Esophagus muscularis mucosa (tissue), 4 donors: ENCODE measurements at regions of chr13 and their contacts with region 1.

Region 1: GRCh38 chr13:36875431-36875830 is 44.6 kb downstream of the SMAD9 start:
- DNase-seq: no peak
- H3K4me3 ChIP-seq: no peak overlapping the region
- H3K27ac ChIP-seq: no peak overlapping the region
- H3K4me1 ChIP-seq: peaks cover 0 to 22% (median 5%) of the 10 kb centered on the region in 4 donors
- H3K27me3 ChIP-seq: no peaks in the 10 kb centered on the region
- CTCF ChIP-seq: no peak
- EP300 ChIP-seq: no peak
- POLR2A ChIP-seq: no peak

Region 2: DNA sequence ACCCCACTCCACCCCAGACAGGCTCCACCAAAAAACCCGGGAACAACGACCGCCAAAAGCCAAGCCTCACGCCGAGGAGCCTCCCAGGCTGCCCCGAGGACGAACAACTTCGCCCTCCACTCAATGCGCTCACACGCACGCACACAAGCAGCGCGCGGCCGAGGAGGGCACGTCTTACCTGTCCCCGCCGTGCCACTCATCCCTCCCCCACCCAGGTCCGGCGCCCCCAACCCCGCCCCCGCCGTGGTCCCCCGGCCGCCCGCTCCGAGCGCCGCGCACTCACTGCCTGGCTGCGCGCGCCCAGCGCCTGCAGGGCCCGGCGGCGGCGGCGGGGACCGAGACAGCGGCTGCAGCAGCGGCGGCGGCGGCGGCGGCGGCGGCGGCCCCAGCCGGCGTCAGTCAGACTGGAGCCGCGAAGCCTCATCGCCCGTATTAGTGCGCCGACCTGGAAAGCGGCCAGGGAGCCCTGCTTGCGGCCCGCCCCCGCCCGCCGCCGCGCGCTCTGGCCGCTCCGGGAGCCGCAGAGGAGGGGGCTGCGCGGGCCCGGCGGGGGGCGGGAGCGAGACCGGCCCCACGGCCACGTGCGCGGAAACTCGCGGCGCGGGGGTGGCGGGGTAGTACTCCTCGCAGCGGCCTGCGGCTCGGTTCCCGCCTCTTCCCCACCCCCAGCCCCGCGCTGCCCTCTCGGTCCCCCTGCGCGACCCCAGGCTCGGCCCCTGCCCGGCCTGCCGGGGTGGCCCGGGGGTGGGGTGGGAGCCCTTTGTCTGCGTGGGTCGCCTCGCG is 44.6 kb after region 1 on chr13 and contains the start of gene SMAD9:
- intact Hi-C with region 1: loop called (anchors 5 kb)
- DNase-seq: no peak
- H3K4me3 ChIP-seq: peak within 1 kb of the TSS; percentile 69 to 82 (median 78)
- H3K27ac ChIP-seq: peak within 1 kb of the TSS; percentile 89 to 93 (median 92)
- H3K4me1 ChIP-seq: peaks cover 8 to 49% (median 41%) of the 10 kb centered on the region in 4 donors
- H3K27me3 ChIP-seq: no peaks in the 10 kb centered on the region
- CTCF ChIP-seq: no peak
- EP300 ChIP-seq: no peak
- POLR2A ChIP-seq: no peak
- total RNA-seq, gene SMAD9: 44.0 to 108 (median 69.0) TPM